Colonic mucosa (tissue), 4 donors: ENCODE measurements at regions of chr3 and their contacts with region 1.

Region 1: GRCh38 chr3:66554178-66554577 is 53.4 kb upstream of the LRIG1 start:
- DNase-seq: no peak
- H3K4me3 ChIP-seq: no peak overlapping the region
- H3K27ac ChIP-seq: no peak overlapping the region
- H3K4me1 ChIP-seq: no peaks in the 10 kb centered on the region
- H3K27me3 ChIP-seq: no peaks in the 10 kb centered on the region
- CTCF ChIP-seq: no peak

Region 2: GRCh38 chr3:66693461-66694031 is 139.4 kb after region 1 on chr3:
- intact Hi-C with region 1: loop called (anchors 10 kb)
- DNase-seq: peak; percentile 41
- H3K4me3 ChIP-seq: no peak overlapping the region
- H3K27ac ChIP-seq: no peak overlapping the region
- H3K4me1 ChIP-seq: peaks cover 4% of the 10 kb centered on the region
- H3K27me3 ChIP-seq: no peaks in the 10 kb centered on the region
- CTCF ChIP-seq: no peak